ENCODE measurements at regions of chr4 and their contacts with region 1.

Region 1: DNA sequence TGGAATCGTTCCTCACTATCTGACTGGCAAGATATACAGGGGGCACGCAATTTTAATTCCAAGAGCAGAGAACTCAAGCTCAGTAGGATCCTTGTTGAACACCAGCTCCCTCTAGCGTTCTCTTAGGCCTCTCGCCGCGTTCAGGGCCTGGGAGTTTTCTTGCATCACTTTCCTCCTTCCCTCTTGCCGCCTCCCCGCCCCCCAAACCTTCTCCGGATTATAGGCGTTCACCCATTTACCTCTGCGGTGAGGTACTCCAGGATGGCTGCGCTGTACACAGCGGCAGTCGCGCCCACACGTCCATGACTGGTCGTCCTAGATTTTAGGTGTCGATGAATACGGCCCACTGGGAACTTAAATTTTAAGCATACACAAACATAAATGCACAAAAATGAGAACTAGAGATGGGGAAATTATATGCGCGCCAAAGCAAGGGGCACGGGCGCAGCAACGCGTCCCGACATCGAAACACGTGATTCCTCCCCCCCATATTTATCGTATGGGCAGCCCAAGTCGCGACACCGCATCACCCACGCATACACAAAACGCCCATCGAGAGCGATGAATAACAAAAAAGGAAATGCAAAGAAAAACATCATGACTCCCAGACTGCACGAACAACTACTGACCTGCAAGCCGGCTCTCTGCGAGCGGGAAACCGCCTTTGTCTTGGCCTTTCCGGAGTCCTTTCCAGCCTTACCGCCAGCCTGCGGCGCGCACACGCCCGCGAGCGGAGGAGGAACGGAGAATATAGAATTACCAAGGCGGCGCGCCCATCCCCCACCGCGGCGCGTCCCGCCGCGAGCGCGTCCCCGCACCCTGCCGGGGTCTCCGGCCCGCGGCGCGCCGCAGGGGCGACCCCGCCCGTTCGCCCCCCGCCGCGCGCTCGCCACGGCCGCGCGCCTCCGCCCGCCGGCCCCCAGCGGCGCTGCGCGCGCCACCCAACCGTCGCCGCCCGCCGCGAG is 759 bp downstream of the H2AZ1 start:
- DNase-seq: peak; percentile 90 to 95 (median 92)
- ATAC-seq: peak; percentile 60
- H3K4me3 ChIP-seq: peak overlapping the region; percentile 59 to 74
- H3K27ac ChIP-seq: peak overlapping the region; percentile 83 to 89
- H3K4me1 ChIP-seq: peaks cover 2 to 45% of the 10 kb centered on the region in 2 donors
- H3K27me3 ChIP-seq: no peaks in the 10 kb centered on the region
- CTCF ChIP-seq: peak; percentile 75 to 89

Region 2: DNA sequence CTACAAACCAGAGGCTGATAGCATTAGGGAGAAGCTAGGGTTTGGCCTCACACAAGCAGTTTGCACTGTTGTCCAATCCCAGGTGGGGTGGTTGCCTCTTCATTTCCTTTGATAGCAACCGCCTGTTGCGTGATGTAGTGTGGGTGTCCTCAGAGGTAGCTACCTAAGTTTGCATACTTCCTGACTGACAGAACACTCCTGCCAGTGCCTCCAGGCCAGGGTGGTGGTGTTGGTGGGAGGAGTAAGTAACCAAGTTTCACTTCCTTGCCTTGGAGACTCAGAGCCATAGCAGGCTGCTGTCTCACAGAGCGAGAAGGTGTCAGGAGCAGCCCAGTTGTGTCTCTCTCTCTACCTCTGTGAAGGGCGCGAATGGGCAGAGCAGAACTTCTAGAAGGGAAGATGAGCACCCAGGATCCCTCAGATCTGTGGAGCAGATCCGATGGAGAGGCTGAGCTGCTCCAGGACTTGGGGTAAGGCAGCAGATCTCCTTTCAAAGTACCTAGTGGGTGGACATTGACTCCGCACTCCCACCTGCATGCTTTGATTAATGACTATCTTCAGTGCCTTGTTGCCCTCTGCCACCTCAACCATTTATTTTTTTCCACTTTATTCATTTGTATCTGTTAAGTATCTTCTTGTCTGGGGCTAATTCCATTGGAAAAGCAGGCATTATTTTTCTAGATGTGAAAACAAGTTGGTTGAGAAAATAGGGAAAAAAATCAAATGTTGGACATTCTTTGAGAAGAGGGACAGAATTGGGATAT is 132.6 kb before region 1 on chr4 and contains the start of gene DAPP1:
- intact Hi-C with region 1: loop called in 1 of 2 experiments (anchors 10 kb)
- DNase-seq: peak in 2 of 4 donors; percentile 66 to 77
- ATAC-seq: peak; percentile 67
- H3K4me3 ChIP-seq: peak within 1 kb of the TSS in 1 of 2 donors; percentile 49
- H3K27ac ChIP-seq: peak within 1 kb of the TSS; percentile 37 to 84
- H3K4me1 ChIP-seq: peaks cover 0 to 51% of the 10 kb centered on the region in 2 donors
- H3K27me3 ChIP-seq: no peaks in the 10 kb centered on the region
- CTCF ChIP-seq: no peak
- polyA plus RNA-seq, gene DAPP1: 1.5 to 3.9 (median 2.8) TPM

Region 3: GRCh38 chr4:99894161-99894997 is 54.9 kb before region 1 on chr4 and contains the start of gene LAMTOR3:
- intact Hi-C with region 1: loop called in 1 of 2 experiments (anchors 10 kb)
- DNase-seq: peak; percentile 85 to 96 (median 94)
- ATAC-seq: peak; percentile 99
- H3K4me3 ChIP-seq: peak within 1 kb of the TSS; percentile 78 to 87
- H3K27ac ChIP-seq: peak within 1 kb of the TSS; percentile 84 to 86
- H3K4me1 ChIP-seq: peaks cover 0 to 43% of the 10 kb centered on the region in 2 donors
- H3K27me3 ChIP-seq: no peaks in the 10 kb centered on the region
- CTCF ChIP-seq: no peak
- polyA plus RNA-seq, gene LAMTOR3: 64.8 to 79.6 (median 72.9) TPM

Measured in left lung (tissue), 14 donors.